ENCODE measurements at regions of chrX and their contacts with region 1.

Region 1: GRCh38 chrX:45515262-45516215 is 314.9 kb upstream of the DIPK2B start:
- DNase-seq: peak; percentile 63
- H3K4me3 Mint-ChIP-seq: peak overlapping the region; percentile 57
- H3K27ac Mint-ChIP-seq: peak overlapping the region; percentile 80
- H3K4me1 Mint-ChIP-seq: peaks cover 37% of the 10 kb centered on the region
- H3K27me3 Mint-ChIP-seq: no peaks in the 10 kb centered on the region
- CTCF ChIP-seq: peak; percentile 57

Region 2: GRCh38 chrX:45749375-45749774 is 233.8 kb after region 1 on chrX:
- CTCF ChIA-PET with region 1: no interaction called
- intact Hi-C with region 1: loop called (anchors 1 kb)
- DNase-seq: no peak
- H3K4me3 Mint-ChIP-seq: peak overlapping the region; percentile 29
- H3K27ac Mint-ChIP-seq: peak overlapping the region; percentile 54
- H3K4me1 Mint-ChIP-seq: peaks cover 39% of the 10 kb centered on the region
- H3K27me3 Mint-ChIP-seq: no peaks in the 10 kb centered on the region
- CTCF ChIP-seq: no peak

Region 3: GRCh38 chrX:45769761-45770582 is 254.4 kb after region 1 on chrX:
- CTCF ChIA-PET with region 1: no interaction called
- intact Hi-C with region 1: loop called (anchors 5 kb)
- DNase-seq: peak; percentile 84
- H3K4me3 Mint-ChIP-seq: peak overlapping the region; percentile 89
- H3K27ac Mint-ChIP-seq: peak overlapping the region; percentile 97
- H3K4me1 Mint-ChIP-seq: peaks cover 30% of the 10 kb centered on the region
- H3K27me3 Mint-ChIP-seq: no peaks in the 10 kb centered on the region
- CTCF ChIP-seq: no peak

Region 4: GRCh38 chrX:45801554-45801953 is 286.0 kb after region 1 on chrX:
- CTCF ChIA-PET with region 1: no interaction called
- intact Hi-C with region 1: loop called (anchors 10 kb)
- DNase-seq: no peak
- H3K4me3 Mint-ChIP-seq: no peak overlapping the region
- H3K27ac Mint-ChIP-seq: no peak overlapping the region
- H3K4me1 Mint-ChIP-seq: peaks cover 45% of the 10 kb centered on the region
- H3K27me3 Mint-ChIP-seq: no peaks in the 10 kb centered on the region
- CTCF ChIP-seq: no peak

Region 5: GRCh38 chrX:46408553-46409407 is 893.2 kb after region 1 on chrX:
- CTCF ChIA-PET with region 1: interaction called, 7 read pairs
- intact Hi-C with region 1: loop called (anchors 1 kb)
- DNase-seq: peak; percentile 75
- H3K4me3 Mint-ChIP-seq: no peak overlapping the region
- H3K27ac Mint-ChIP-seq: peak overlapping the region; percentile 18
- H3K4me1 Mint-ChIP-seq: peaks cover 13% of the 10 kb centered on the region
- H3K27me3 Mint-ChIP-seq: no peaks in the 10 kb centered on the region
- CTCF ChIP-seq: peak; percentile 64